Activated CD4-positive, alpha-beta T cell treated with anti-CD3 and anti-CD28 coated beads for 36 hours (primary cell): ENCODE measurements at regions of chr14 and their contacts with region 1.

Region 1: DNA sequence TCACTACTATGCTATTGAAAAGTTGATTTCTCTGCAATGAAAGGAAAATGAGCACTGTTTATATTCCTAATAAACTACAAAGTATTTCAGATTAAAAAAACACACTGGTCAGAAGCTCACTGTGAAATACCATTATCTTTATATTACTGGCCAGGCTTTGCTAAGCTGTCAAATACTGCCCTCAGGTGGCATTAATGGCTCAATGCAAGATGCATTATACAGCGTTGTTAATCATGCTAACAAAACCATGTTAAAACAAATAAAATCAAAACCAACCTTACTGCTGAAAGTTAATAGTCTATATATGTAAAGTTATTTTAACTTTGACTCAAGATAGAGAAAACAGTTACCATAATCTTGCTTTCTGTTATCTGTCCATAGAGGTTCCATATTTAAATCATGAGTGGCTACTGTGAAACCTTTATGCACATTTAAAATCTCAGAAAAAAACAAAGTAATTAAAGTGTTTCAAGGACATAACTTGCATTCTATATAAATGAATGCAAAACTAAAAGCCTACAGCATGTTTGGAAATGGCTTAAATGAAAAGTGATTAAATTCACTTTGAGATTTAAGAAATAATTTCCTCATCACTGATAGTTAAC is 121.7 kb downstream of the RALGAPA1 start:
- DNase-seq: peak; percentile 42
- ATAC-seq: peak; percentile 51
- H3K4me3 Mint-ChIP-seq: no peak overlapping the region
- H3K27ac Mint-ChIP-seq: no peak overlapping the region
- H3K4me1 Mint-ChIP-seq: peaks cover 16% of the 10 kb centered on the region
- H3K27me3 Mint-ChIP-seq: no peaks in the 10 kb centered on the region

Region 2: DNA sequence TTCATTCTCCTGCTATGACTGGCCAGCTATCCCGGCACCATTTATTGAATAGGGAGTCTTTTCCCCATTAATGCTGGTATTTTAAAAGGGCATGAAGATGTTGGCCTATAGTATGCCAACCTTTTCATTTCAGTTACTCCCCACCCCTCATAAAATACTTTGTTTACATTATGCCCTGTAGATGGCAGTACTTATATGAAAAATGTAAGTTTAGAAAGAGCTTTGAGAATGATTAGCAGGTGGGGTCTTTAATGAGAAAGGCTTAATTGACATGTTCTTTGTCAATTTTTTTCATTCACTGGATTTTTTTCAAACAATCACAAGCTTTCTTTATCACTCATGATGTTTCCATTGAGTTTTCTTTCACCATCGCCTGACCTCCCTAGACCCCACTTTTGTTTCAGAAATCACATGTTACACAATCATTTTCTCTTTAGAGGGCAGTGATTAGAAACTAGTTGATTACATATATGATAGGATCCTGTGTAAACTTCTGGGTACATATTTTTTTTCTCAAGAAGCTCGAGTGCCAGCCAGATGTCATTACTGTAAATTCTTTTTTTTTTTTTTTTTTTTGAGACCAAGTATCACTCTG is 457.8 kb before region 1 on chr14:
- CTCF ChIA-PET with region 1: interaction called, 3 read pairs
- POLR2A ChIA-PET with region 1: no interaction called
- intact Hi-C with region 1: loop called in 1 of 2 experiments (anchors 10 kb)
- DNase-seq: no peak
- ATAC-seq: peak; percentile 63
- H3K4me3 Mint-ChIP-seq: no peak overlapping the region
- H3K27ac Mint-ChIP-seq: peak overlapping the region; percentile 51
- H3K4me1 Mint-ChIP-seq: peaks cover 27% of the 10 kb centered on the region
- H3K27me3 Mint-ChIP-seq: no peaks in the 10 kb centered on the region

Region 3: DNA sequence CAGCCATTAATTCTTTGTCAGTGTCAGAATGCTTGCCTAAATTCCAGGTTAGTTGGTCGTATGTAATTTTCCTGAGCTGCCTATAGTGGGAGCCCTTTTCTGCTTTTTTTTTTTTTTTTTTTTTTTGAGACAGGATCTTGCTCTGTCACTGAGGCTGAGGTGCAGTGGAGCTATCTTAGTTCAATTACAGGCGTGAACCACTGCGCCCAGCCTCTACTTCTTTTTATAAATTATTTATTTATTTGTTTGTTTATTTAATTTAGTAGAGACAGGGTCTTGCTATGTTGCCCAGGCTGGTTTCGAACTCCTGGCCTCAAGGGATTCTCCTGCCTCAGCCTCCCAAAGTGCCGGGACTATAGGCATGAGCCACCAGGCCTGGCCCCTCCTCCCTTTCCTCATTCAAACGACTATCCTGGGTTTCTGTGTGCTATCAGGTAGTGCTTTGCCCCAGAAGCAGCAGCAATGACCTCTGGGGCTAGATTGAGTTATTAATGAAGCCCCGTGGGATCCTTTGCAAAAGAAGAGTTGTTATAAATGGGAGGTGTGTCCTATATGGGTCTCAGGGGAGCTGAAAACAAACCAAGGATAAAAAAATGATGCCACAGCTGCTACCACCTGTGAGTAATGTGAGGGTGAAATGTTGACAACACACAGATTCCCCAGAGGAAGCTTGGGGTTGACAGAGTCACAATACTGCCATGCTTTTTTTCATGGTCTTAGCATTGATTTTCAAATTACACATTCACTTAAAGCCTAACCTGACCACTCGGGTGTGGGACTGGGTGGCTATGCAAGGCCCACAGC is 248.3 kb before region 1 on chr14:
- CTCF ChIA-PET with region 1: interaction called, 9 read pairs
- POLR2A ChIA-PET with region 1: no interaction called
- intact Hi-C with region 1: loop called (anchors 1 to 5 kb)
- DNase-seq: no peak
- ATAC-seq: peak; percentile 49
- H3K4me3 Mint-ChIP-seq: no peak overlapping the region
- H3K27ac Mint-ChIP-seq: no peak overlapping the region
- H3K4me1 Mint-ChIP-seq: peaks cover 7% of the 10 kb centered on the region
- H3K27me3 Mint-ChIP-seq: no peaks in the 10 kb centered on the region

Region 4: GRCh38 chr14:35814371-35815005 is 127.1 kb after region 1 on chr14:
- CTCF ChIA-PET with region 1: interaction called, 7 read pairs
- POLR2A ChIA-PET with region 1: no interaction called
- intact Hi-C with region 1: loop called (anchors 2 to 5 kb)
- DNase-seq: peak; percentile 90
- ATAC-seq: peak; percentile 89
- H3K4me3 Mint-ChIP-seq: no peak overlapping the region
- H3K27ac Mint-ChIP-seq: no peak overlapping the region
- H3K4me1 Mint-ChIP-seq: no peaks in the 10 kb centered on the region
- H3K27me3 Mint-ChIP-seq: no peaks in the 10 kb centered on the region